ENCODE measurements at regions of chr11 and their contacts with region 1.

Region 1: DNA sequence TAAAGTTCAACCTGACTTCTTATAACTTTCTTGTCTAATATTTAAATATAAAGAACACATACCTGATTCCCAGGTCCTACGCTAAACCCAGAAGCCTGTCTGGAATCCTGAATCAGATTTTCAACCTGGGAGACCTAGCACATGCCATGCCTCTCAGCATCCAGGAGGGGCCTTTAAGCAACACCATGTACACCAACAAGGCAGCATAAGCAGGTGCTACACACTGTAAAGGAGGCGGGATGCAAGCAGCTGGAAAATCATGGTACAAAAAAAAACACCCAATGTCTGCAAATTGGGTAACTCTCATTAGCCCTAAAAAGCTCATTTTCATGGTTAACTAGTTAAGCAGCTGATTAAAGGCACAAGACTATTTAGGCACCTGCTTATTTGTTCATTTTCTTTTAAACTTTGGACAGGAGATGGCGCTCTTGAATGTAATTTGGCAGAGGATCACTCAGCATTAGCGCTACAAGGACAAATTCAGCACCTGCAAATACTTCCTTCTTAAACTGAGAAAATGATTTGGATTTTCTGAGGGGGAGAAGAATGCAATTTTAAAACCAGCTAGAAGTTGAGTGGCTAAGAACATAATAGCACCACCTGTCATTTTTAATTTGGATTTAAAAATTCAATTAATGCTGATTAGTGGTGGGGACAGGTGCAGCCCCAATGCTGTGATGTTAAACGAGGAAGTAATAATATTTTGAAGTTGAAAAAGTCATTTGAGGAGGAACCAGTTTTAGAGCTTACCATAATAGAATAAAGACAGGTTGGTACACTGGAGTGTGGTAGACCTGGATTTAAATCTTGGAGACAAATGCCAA is 104.0 kb downstream of the FAR1 start:
- DNase-seq: peak; percentile 24
- CTCF ChIP-seq: peak; percentile 43

Region 2: GRCh38 chr11:13761712-13762111 is 10.7 kb before region 1 on chr11:
- CTCF ChIA-PET with region 1: interaction called, 29 read pairs
- POLR2A ChIA-PET with region 1: no interaction called
- DNase-seq: no peak
- CTCF ChIP-seq: no peak

Region 3: GRCh38 chr11:13786668-13787067 is 14.2 kb after region 1 on chr11:
- CTCF ChIA-PET with region 1: interaction called, 14 read pairs
- POLR2A ChIA-PET with region 1: no interaction called
- DNase-seq: no peak
- CTCF ChIP-seq: no peak

Region 4: GRCh38 chr11:14249121-14249963 is 476.9 kb after region 1 on chr11:
- CTCF ChIA-PET with region 1: interaction called, 11 read pairs
- POLR2A ChIA-PET with region 1: no interaction called
- DNase-seq: peak; percentile 56
- CTCF ChIP-seq: peak; percentile 88

Measured in GM10248 (cell line).